ENCODE measurements at regions of chr20 and their contacts with region 1.

Region 1: DNA sequence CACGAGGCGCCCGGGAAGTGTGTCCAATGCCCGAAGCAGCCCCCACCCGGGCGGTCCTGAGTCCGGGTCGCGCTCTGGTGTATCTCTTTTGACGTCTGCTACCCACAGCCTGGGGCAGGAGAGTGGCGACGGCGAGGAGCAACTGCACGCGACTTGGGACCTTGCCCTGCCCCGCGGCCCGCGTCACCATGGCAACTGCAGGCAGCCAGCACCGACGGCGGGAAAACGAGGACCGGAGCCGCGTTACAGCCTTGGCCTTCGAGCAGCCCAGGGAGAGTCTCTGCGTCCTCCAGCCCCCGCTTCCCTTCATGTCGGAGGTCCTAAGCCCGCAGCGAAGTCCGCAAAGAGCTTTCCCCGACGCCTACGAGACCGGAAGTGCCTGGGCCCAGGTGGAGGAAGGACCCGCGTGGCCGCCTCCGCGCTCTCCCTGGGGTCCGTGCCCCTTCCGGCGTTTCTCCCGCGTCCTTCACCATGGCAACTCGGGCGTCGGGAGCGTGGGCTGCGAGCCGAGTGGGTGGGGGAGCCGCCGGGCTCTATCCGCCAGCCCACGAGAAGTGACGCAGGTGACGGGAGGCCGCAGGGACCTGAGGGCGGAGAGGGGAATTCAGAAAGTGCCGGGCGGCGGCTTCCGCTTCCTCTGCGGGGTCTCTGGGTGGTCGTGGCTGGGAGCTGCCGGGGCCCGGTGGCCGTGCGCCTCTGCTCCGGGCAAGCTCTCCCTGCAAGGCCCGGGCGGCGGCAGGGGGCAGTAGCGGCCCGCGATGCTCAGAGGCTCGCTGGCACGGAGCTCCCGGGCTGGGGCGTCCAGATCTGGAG is 88.6 kb upstream of the TGM3 start:
- DNase-seq: peak; percentile 76 to 84
- ATAC-seq: peak; percentile 86 to 90 (median 90)
- H3K4me3 ChIP-seq: peak overlapping the region; percentile 65
- H3K27ac ChIP-seq: no peak overlapping the region
- H3K4me1 ChIP-seq: no peaks in the 10 kb centered on the region
- H3K27me3 ChIP-seq: peaks cover 0 to 63% (median 3%) of the 10 kb centered on the region in 3 donors
- CTCF ChIP-seq: peak; percentile 76

Region 2: DNA sequence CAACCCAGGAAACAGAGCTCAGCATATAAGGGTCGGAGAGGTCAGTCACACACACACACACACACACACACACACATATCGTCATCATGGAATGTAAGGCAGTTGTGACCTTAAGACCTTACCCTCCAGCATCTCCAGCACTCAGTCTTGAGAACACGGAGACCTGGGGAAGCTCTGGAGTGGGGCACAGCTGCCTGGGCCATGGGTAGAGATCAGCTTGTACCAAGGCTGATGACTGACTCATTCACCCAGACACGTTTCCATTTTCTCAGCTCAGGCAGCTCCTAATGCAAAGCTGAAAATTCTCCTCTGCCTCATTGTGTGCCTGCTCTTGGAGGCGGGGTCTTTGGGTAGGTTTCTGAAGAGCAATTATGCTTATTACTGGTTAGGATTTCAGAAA is 175.0 kb before region 1 on chr20:
- intact Hi-C with region 1: no loop called
- DNase-seq: no peak
- ATAC-seq: no peak
- H3K4me3 ChIP-seq: no peak overlapping the region
- H3K27ac ChIP-seq: no peak overlapping the region
- H3K4me1 ChIP-seq: no peaks in the 10 kb centered on the region
- H3K27me3 ChIP-seq: peaks cover 0 to 13% (median 0%) of the 10 kb centered on the region in 3 donors
- CTCF ChIP-seq: no peak

Region 3: DNA sequence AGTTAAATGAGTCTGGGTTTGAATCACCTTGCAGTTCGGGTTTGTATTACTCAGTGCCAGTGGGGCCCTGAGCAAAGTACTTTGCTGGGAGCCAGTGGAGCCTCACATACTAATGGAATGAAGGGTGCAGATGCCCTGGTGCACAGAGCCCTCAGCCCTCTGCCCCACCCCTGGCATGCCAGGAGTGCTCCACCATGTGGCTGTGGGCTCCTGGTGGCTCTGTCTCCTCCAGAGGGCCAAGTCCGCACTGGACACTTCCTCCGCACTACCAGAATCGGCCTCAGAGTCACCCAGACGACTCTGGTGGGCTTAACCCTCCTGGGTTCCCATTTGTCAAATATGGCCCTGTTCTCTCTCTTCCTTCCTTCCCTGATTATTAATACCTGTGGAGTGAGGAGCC is 11.5 kb before region 1 on chr20:
- intact Hi-C with region 1: loop called in 1 of 2 experiments (anchors 1 kb)
- DNase-seq: no peak
- ATAC-seq: no peak
- H3K4me3 ChIP-seq: no peak overlapping the region
- H3K27ac ChIP-seq: no peak overlapping the region
- H3K4me1 ChIP-seq: no peaks in the 10 kb centered on the region
- H3K27me3 ChIP-seq: peaks cover 0 to 9% (median 3%) of the 10 kb centered on the region in 3 donors
- CTCF ChIP-seq: no peak

Region 4: DNA sequence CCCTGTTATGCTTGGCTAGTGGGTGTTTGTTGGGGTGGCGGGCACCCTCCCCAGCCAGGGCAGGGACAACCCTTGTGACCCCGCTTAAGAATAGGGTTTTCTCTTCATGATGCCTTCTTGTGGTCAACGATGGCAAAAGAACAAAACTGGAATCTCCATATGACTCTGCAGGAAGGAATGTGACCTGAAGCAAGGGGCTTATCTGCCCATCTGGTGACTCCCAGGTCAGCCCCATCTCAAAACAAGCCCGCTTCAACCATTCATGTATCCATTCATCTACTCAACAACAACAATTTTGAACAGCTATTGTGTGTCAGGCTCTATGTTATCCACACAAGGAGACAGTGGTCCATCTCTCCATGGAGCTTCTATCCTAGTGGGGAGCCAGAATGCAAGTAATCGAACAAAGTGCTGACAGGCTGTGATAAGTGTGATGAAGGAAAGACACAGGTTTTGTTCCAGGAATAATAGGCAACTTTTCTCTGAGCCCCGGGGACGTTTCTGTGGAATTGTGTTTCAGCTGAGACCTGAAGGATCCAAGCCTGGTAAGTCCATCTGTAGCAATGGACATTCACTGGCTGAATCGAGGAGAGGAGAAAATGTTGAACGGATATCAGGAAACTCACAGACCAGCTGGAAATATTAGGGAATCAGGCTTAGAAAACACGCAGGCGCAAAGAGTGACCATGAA is 142.8 kb after region 1 on chr20:
- intact Hi-C with region 1: loop called in 1 of 2 experiments (anchors 5 kb)
- DNase-seq: no peak
- ATAC-seq: no peak
- H3K4me3 ChIP-seq: no peak overlapping the region
- H3K27ac ChIP-seq: no peak overlapping the region
- H3K4me1 ChIP-seq: no peaks in the 10 kb centered on the region
- H3K27me3 ChIP-seq: peaks cover 0 to 18% (median 3%) of the 10 kb centered on the region in 3 donors
- CTCF ChIP-seq: no peak

Region 5: GRCh38 chr20:2451939-2452732 is 245.0 kb after region 1 on chr20:
- intact Hi-C with region 1: loop called (anchors 1 to 5 kb)
- DNase-seq: peak; percentile 55 to 78
- ATAC-seq: peak; percentile 54 to 83 (median 76)
- H3K4me3 ChIP-seq: no peak overlapping the region
- H3K27ac ChIP-seq: no peak overlapping the region
- H3K4me1 ChIP-seq: no peaks in the 10 kb centered on the region
- H3K27me3 ChIP-seq: no peaks in the 10 kb centered on the region
- CTCF ChIP-seq: peak; percentile 70

Region 6: DNA sequence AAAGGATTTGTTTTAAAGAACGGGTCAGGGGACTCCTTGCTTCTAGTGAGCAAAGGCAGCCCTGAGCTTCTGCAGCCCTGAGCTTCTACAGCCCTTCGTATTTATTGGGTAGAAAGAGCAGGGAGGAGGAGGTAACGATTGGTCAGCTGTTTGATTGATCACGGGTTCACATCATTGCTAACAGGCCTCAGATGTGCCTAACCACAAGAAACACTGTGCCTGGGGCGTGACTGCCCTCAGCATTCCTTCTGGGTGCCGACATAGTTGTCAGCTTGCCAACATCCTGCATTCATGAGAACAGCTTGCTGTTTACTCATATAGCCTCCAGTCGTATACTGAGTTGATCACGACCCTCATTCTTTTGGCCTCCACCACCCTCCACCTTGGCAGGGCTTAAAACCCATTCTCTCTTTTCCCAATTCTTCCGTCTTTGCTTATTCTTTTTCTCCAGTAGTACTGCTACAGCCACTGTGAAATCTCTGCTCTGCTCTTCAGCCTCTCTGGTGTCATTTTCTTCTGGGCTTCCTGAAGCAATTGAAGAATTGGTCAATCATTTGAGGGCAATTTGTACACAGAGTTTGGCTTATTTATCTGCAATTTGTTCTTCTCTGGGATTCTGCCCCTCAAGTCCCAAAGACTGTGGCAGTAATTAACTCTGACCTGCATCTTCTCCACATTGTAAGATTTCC is 419.8 kb after region 1 on chr20:
- intact Hi-C with region 1: no loop called
- DNase-seq: no peak
- ATAC-seq: no peak
- H3K4me3 ChIP-seq: no peak overlapping the region
- H3K27ac ChIP-seq: no peak overlapping the region
- H3K4me1 ChIP-seq: no peaks in the 10 kb centered on the region
- H3K27me3 ChIP-seq: no peaks in the 10 kb centered on the region
- CTCF ChIP-seq: no peak

Measured in psoas muscle (tissue), 8 donors.